Panc1 (cell line): ENCODE measurements at regions of chr17 and their contacts with region 1.

Region 1: GRCh38 chr17:8091033-8091687 is 3.6 kb upstream of the ALOX12B start:
- DNase-seq: no peak
- ATAC-seq: no peak
- H3K4me3 ChIP-seq: no peak overlapping the region
- H3K27ac ChIP-seq: no peak overlapping the region
- H3K4me1 ChIP-seq: no peaks in the 10 kb centered on the region
- H3K27me3 ChIP-seq: no peaks in the 10 kb centered on the region; the same call in 1 of the 2 replicates
- CTCF ChIP-seq: no peak

Region 2: GRCh38 chr17:8057691-8058114 is 33.5 kb before region 1 on chr17:
- CTCF ChIA-PET with region 1: interaction called, 10 read pairs
- POLR2A ChIA-PET with region 1: no interaction called
- in situ Hi-C with region 1: no loop called
- intact Hi-C with region 1: no loop called
- DNase-seq: peak; percentile 75
- ATAC-seq: peak; percentile 89
- H3K4me3 ChIP-seq: peak overlapping the region; percentile 12; a peak in 3 of 4 replicates
- H3K27ac ChIP-seq: no peak overlapping the region
- H3K4me1 ChIP-seq: peaks cover 10% of the 10 kb centered on the region
- H3K27me3 ChIP-seq: peaks cover 4% of the 10 kb centered on the region
- CTCF ChIP-seq: peak; percentile 84

Region 3: DNA sequence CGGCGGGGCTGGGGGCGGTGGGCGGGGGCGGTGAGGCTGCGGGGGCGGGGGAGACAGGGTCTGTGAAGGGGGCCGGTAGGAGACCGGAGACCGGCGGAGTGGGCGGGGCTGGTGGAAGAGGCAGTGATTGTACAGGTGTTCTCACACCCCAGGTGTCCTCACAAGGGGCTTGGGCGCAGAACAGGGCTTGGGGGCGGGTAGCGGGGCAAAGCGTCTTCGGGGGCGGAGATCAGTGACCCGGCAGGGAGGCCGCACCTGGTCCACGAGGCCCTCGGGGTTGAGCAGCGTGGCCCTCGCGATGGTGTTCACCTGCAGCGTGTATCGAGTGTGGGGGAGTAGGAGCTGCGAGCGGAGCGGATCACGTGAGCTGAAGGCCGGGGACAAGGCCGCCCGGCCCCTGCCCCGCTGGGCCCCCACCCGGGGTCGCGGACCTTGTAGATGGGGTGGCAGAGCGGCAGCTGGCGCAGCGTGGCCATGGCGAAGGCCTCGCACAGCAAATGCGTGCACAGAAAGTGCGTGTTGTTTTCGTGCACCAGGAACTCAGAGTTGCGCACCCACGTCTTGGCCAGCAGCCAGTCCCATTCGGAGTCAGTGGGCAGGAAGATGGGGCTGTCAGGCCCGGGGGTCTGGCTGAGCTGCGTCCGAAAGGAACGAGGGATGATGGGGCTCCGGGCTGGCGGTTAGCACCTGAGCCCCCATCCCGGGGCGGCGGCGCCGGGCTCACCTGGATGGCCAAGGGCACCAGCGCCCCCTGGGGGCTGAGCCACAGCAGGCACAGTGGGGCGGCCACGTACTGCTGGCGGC is 18.7 kb after region 1 on chr17:
- CTCF ChIA-PET with region 1: interaction called, 7 read pairs
- POLR2A ChIA-PET with region 1: interaction called, 13 read pairs
- in situ Hi-C with region 1: no loop called
- intact Hi-C with region 1: no loop called
- DNase-seq: no peak
- ATAC-seq: peak; percentile 90
- H3K4me3 ChIP-seq: no peak overlapping the region
- H3K27ac ChIP-seq: no peak overlapping the region
- H3K4me1 ChIP-seq: no peaks in the 10 kb centered on the region
- H3K27me3 ChIP-seq: no peaks in the 10 kb centered on the region
- CTCF ChIP-seq: peak; percentile 91

Region 4: GRCh38 chr17:8118769-8119580 is 27.8 kb after region 1 on chr17:
- CTCF ChIA-PET with region 1: interaction called, 12 read pairs
- POLR2A ChIA-PET with region 1: no interaction called
- in situ Hi-C with region 1: no loop called
- intact Hi-C with region 1: no loop called
- DNase-seq: no peak
- ATAC-seq: peak; percentile 68
- H3K4me3 ChIP-seq: peak overlapping the region; percentile 60 to 91
- H3K27ac ChIP-seq: peak overlapping the region; percentile 63; the same call in 1 of the 2 replicates
- H3K4me1 ChIP-seq: no peaks in the 10 kb centered on the region
- H3K27me3 ChIP-seq: no peaks in the 10 kb centered on the region
- CTCF ChIP-seq: peak; percentile 97

Region 5: GRCh38 chr17:8173056-8173870 is 82.1 kb after region 1 on chr17:
- CTCF ChIA-PET with region 1: no interaction called
- POLR2A ChIA-PET with region 1: interaction called, 10 read pairs
- in situ Hi-C with region 1: no loop called
- intact Hi-C with region 1: no loop called
- DNase-seq: peak; percentile 99
- ATAC-seq: peak; percentile 83
- H3K4me3 ChIP-seq: peak overlapping the region; percentile 45 to 67
- H3K27ac ChIP-seq: peak overlapping the region; percentile 96
- H3K4me1 ChIP-seq: peaks cover 18% of the 10 kb centered on the region
- H3K27me3 ChIP-seq: no peaks in the 10 kb centered on the region
- CTCF ChIP-seq: no peak